ENCODE measurements at regions of chr5 and their contacts with region 1.

Region 1: DNA sequence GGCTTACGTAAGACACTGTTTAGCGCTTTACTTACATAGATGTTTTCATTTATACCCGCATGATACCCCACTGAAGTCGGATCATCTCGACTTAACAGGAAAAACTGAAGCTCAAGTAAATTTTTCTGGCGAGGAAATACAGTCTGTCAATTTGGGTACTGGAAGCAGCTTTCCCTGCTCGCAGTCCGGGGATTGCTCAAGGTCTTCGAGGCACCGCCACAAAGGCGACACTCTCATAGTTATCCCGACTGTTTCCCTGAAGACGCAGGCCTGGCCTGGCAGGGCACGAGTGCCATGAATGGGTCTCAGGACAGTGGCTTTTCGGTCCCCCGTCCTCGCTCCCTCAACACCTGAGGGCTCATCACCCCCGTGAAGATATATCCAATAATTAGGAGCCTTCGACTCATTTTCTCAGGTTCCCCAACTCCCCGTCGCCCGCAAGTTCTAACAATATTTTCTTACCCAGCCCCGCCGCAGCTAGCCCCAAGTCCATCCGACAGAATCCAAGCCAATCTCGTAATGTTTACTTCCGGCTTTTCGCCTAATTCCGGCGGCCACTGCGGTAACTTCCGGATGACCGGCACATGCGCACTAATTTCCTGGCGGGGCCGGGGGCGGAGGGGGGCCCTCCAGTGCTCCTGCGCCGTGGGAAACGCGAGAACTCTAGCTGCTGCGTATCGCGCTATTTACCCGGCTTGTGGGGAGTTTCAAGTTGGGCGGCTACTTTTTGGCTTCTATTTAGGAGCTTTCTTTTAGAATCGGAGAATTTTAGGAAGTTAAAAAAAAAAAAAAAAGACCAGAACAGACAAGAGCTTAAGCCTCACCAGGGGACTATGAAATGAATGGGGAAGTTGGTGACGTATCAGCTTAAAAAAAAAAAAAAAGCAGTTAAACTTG is at the start of gene SLU7:
- DNase-seq: peak; percentile 96
- ATAC-seq: peak; percentile 84
- H3K4me3 Mint-ChIP-seq: peak within 1 kb of the TSS; percentile 100
- H3K27ac Mint-ChIP-seq: peak within 1 kb of the TSS; percentile 99
- H3K4me1 Mint-ChIP-seq: peaks cover 63% of the 10 kb centered on the region
- H3K27me3 Mint-ChIP-seq: no peaks in the 10 kb centered on the region
- total RNA-seq, gene SLU7: 41.0 to 46.9 TPM

Region 2: GRCh38 chr5:160399402-160400353 is 19.1 kb before region 1 on chr5 and contains the start of gene FAM200C:
- CTCF ChIA-PET with region 1: interaction called, 4 read pairs
- POLR2A ChIA-PET with region 1: interaction called, 14 read pairs
- DNase-seq: peak; percentile 77
- ATAC-seq: peak; percentile 89
- H3K4me3 Mint-ChIP-seq: peak within 1 kb of the TSS; percentile 90
- H3K27ac Mint-ChIP-seq: peak within 1 kb of the TSS; percentile 67
- H3K4me1 Mint-ChIP-seq: peaks cover 15% of the 10 kb centered on the region
- H3K27me3 Mint-ChIP-seq: no peaks in the 10 kb centered on the region
- total RNA-seq, gene FAM200C: 0.29 to 0.45 TPM

Region 3: DNA sequence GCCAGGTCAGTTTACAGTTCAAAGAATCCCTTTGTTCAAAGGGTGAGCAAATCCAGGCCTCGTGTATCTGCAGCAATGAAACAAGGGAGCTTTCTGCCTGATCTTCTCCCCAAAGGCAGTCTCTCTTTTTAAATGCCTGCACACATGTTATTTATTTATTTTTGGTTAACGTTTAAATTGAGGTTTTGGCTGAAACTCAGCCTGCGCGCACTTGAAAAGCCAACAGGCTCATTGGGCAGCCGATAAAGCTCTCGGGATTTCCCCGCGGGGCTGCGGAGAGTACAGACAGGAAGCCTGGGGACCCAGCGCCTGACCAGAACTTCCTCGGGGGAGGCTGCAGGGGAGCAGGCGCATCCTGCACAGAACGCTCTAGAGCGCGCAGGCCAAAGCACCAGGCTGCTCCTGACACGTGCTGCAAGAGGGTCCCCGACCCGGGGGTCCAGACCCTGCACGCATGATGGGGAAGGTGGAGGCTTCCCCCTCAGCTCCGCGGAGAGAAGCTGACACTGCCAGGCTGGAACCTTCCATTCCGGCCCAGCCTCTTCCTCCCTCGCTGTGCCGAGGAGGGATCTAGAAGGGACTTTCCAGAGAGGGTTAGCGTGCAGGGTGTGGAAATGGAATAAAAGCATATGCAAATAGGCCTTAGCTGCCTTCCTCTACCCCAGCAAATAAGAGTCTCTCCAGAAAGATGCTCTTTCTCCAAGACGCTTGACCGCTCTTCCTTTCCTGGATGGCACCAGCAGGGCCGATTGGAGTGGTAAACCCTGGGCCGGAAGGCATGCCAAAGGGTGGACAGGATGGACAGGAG is 49.0 kb after region 1 on chr5:
- CTCF ChIA-PET with region 1: interaction called, 17 read pairs
- POLR2A ChIA-PET with region 1: interaction called, 21 read pairs
- DNase-seq: peak; percentile 87
- ATAC-seq: peak; percentile 92
- H3K4me3 Mint-ChIP-seq: peak overlapping the region; percentile 86
- H3K27ac Mint-ChIP-seq: peak overlapping the region; percentile 90
- H3K4me1 Mint-ChIP-seq: peaks cover 80% of the 10 kb centered on the region
- H3K27me3 Mint-ChIP-seq: peaks cover 2% of the 10 kb centered on the region

Region 4: DNA sequence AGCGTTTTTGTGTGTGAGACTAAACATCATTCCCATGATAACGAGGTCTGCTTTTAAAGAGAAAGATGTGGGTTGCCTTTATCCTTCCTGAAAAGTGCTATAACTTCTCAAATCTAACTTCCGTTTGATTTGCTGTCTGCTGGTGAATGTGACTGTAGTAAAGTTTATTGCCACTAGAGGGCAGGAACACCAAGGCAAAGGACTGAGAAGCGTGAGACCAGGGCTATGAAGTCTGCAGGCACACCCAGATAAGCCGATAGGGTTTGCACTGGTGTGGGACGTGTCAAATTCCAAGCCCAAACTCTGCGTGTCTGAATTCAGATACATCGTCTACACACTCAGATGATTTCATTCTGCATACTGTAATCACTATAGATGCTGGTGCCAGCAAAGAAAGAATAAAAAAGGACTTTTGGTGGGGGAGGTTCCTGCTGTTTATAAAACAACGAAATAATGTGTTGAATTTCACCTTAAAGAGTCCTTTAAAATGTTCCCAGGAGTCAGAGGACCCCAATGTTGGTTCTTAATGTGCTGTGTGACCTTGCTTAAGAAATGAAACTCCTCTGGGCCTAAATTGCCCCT is 90.1 kb after region 1 on chr5:
- CTCF ChIA-PET with region 1: interaction called, 13 read pairs
- POLR2A ChIA-PET with region 1: interaction called, 13 read pairs
- DNase-seq: peak; percentile 79
- ATAC-seq: peak; percentile 68
- H3K4me3 Mint-ChIP-seq: no peak overlapping the region
- H3K27ac Mint-ChIP-seq: no peak overlapping the region
- H3K4me1 Mint-ChIP-seq: peaks cover 38% of the 10 kb centered on the region
- H3K27me3 Mint-ChIP-seq: peaks cover 7% of the 10 kb centered on the region

Measured in activated CD8-positive, alpha-beta T cell treated with anti-CD3 and anti-CD28 coated beads, Interleukin-2, amount 10 ng/mL, durations not matched to agents 7 days and 5 days (primary cell).